ENCODE measurements at regions of chrX and their contacts with region 1.

Region 1: DNA sequence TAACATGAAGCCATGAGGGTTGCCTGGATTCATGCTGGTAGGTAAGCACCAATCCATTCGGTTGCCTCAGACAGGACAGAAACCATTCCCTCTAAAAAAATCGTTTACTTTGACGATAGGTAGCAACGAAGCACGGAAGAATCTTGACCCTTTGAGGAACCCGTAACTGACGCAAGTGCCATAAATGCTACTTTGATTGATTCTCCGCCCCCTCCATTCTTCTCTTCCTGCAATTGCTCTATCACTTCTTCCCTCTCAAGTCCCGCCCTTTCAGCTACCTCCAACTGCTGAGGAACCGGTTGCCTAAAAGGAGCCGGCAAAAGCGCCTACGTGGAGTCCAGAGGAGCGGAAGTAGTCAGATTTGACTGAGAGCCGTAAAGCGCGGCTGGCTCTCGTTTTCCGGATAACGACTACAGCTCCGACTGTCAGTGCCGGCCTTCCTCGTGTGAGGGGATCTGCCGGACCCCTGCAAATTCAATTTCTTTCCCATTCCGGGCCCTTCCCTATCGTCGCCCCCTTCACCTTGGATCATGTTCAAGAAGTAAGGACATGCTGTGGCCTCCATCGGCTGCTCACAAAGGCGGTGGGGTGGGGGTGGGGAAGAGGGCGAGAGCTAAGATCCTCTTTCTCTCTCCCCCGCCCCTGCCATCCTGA is at the start of gene MCTS1:
- DNase-seq: peak; percentile 85 to 98
- H3K4me3 ChIP-seq: peak within 1 kb of the TSS; percentile 61
- H3K27ac ChIP-seq: peak within 1 kb of the TSS; percentile 86
- H3K4me1 ChIP-seq: peaks cover 22% of the 10 kb centered on the region
- H3K27me3 ChIP-seq: no peaks in the 10 kb centered on the region
- CTCF ChIP-seq: no peak
- total RNA-seq, gene MCTS1: 90.7 and 98.4 TPM in 2 replicates

Region 2: DNA sequence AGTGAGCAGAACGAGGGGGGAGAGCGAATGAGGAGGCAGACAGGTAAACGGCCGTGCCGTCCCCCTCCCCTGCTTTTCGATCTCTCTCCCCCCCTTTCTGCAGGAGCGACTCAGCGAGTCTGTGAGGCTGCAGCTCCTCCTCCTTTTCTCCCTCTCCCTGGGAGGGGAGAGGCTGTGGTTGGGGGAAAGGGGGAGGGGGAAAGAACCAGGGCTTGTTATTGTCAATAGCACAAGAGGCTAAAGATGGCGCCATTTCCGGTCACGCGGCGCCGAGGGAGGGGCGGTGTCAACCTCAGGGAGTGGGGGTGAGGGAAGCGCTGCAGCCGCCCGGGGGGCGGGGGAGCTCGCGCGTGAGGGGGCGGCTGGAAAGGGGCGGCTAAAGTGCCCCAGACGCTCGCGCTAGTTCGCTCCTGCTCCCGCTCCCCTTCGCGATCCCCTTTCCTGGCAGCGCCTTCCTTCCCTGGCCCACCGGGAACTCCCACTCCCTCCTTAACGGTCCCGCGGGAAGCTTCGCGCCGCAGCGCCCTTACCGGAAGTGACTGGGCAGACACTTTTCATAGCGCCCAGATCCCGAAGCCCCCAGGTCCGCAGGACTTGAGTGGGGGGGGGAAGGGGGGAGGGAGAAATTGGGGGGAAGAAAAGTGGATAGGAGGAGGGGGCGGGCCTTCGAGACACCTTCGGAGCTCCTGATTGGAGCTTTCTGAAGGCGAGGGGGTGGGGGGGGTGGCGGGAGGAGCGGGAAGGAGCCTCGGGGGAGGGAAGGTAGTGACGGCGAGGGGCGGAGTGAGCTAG is 42.8 kb before region 1 on chrX and contains the start of gene CUL4B:
- CTCF ChIA-PET with region 1: no interaction called
- POLR2A ChIA-PET with region 1: interaction called, 54 read pairs
- intact Hi-C with region 1: loop called (anchors 1 kb)
- DNase-seq: peak; percentile 94 to 95
- H3K4me3 ChIP-seq: peak within 1 kb of the TSS; percentile 92
- H3K27ac ChIP-seq: peak within 1 kb of the TSS; percentile 98
- H3K4me1 ChIP-seq: peaks cover 33% of the 10 kb centered on the region
- H3K27me3 ChIP-seq: no peaks in the 10 kb centered on the region
- CTCF ChIP-seq: 0 out of 2 replicates have a peak, but pooled peaks have one; percentile 24
- total RNA-seq, gene CUL4B: 98.6 and 154 TPM in 2 replicates

Region 3: GRCh38 chrX:120568035-120568434 is 35.8 kb before region 1 on chrX:
- CTCF ChIA-PET with region 1: no interaction called
- POLR2A ChIA-PET with region 1: interaction called, 18 read pairs
- intact Hi-C with region 1: no loop called
- DNase-seq: peak; percentile 11 to 84
- H3K4me3 ChIP-seq: 0 out of 2 replicates have a peak overlapping the region, but pooled peaks have one; percentile 14
- H3K27ac ChIP-seq: peak overlapping the region; percentile 77
- H3K4me1 ChIP-seq: peaks cover 18% of the 10 kb centered on the region
- H3K27me3 ChIP-seq: no peaks in the 10 kb centered on the region
- CTCF ChIP-seq: no peak

Region 4: DNA sequence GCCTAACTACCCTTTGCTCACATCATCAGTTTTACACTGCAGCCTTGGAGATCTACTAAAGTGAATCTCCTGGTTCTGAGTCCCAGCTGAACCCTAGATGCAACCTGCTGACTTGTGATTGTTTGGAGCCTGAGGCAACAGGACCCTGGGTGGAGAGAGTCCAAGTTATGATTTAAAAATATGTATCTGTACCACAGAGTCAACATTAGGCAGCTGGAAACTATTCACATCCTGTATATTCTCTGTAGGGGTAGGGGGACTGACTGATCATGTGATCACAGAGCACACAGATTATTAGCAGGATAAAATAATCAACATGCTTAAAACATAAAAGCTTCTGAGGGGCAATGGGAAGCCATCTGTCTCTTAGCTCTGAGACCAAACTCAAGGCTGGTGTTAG is 219.7 kb after region 1 on chrX:
- CTCF ChIA-PET with region 1: no interaction called
- POLR2A ChIA-PET with region 1: no interaction called
- intact Hi-C with region 1: no loop called
- DNase-seq: no peak
- H3K4me3 ChIP-seq: no peak overlapping the region
- H3K27ac ChIP-seq: no peak overlapping the region
- H3K4me1 ChIP-seq: peaks cover 12% of the 10 kb centered on the region; the same call in 1 of the 2 replicates
- H3K27me3 ChIP-seq: no peaks in the 10 kb centered on the region
- CTCF ChIP-seq: no peak

Measured in PC-9 (cell line).